Calu3 (cell line): ENCODE measurements at regions of chr14 and their contacts with region 1.

Region 1: DNA sequence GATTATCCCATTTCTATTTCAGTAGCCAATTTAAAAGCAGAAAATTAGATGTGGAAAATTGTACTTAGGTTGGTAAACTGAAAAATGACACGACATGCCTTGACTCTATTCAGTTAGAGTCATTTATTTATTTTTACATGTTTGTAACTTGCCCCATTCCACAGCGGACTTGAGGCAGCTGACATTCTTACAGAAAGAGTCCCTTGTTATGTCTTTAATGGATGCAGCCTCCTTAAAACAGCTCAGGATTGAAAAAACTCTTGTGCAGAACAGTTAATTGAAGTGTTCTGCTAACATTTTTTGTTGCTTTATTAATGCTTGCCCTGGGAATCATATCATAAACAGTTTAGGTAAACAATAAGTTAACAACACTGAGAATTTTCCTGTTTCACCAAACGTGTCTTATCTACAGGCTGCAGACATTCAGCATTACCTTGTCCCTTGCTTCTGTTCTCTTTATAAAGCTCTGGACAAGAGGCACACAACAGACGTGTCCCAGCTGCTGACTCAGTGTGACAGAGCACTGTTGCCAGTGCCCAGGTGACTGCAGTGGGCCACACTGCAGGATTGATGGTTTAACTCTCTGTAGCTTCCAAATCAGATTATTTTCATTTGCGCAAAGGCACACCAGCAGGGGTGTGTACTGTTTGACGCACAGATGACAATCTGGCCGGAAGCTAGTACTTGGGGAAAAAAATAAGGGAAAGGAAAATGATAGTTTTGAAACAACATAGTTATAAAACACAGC is 101.6 kb downstream of the PELI2 start:
- DNase-seq: no peak
- H3K4me3 Mint-ChIP-seq: no peak overlapping the region
- H3K27ac Mint-ChIP-seq: no peak overlapping the region
- H3K4me1 Mint-ChIP-seq: peaks cover 5% of the 10 kb centered on the region
- H3K27me3 Mint-ChIP-seq: no peaks in the 10 kb centered on the region
- CTCF ChIP-seq: no peak

Region 2: GRCh38 chr14:56145965-56146364 is 73.9 kb before region 1 on chr14:
- CTCF ChIA-PET with region 1: no interaction called
- intact Hi-C with region 1: loop called (anchors 10 kb)
- DNase-seq: no peak
- H3K4me3 Mint-ChIP-seq: no peak overlapping the region
- H3K27ac Mint-ChIP-seq: no peak overlapping the region
- H3K4me1 Mint-ChIP-seq: peaks cover 27% of the 10 kb centered on the region
- H3K27me3 Mint-ChIP-seq: no peaks in the 10 kb centered on the region
- CTCF ChIP-seq: no peak

Region 3: DNA sequence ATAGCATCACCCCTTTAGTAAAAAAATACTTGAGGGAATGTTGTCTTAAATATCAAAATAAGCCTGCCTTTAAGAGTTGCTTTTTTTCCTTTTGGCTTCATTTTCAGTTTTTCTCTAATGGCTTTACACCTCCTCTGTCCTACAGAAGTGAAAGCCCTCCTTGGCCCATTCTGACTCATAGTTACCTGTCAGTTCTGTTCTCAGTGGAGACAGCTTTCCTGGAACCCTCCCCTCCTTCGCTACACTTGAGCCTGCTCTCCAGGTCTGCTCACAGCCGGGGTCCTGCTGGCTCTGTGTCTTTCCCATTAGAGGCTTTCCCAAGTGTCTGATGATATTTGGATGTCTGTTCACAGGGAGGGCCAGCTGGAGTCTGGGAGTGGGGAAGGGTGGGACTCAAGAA is 17.6 kb before region 1 on chr14:
- CTCF ChIA-PET with region 1: no interaction called
- intact Hi-C with region 1: no loop called
- DNase-seq: no peak
- H3K4me3 Mint-ChIP-seq: no peak overlapping the region
- H3K27ac Mint-ChIP-seq: no peak overlapping the region
- H3K4me1 Mint-ChIP-seq: no peaks in the 10 kb centered on the region
- H3K27me3 Mint-ChIP-seq: no peaks in the 10 kb centered on the region
- CTCF ChIP-seq: no peak

Region 4: DNA sequence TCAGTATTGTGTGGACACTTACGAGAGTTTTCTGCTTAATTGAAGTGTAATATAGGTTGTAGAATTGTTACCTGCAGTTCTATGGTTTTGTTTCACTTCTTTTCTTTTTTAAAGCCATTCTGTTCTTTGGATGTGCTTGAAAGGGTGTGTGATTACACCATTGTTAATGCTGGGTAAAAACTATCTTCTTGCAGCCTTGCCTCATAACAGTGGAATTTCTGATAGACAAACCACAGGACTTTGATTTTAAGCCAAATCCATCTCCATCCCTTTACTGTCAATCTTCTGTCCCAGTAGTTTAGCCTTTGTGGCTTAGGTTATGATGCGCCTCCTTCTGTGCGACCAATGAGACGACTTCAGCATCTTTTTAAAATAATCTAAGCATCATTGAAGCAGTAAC is 80.7 kb after region 1 on chr14:
- CTCF ChIA-PET with region 1: no interaction called
- intact Hi-C with region 1: no loop called
- DNase-seq: no peak
- H3K4me3 Mint-ChIP-seq: no peak overlapping the region
- H3K27ac Mint-ChIP-seq: no peak overlapping the region
- H3K4me1 Mint-ChIP-seq: no peaks in the 10 kb centered on the region
- H3K27me3 Mint-ChIP-seq: no peaks in the 10 kb centered on the region
- CTCF ChIP-seq: no peak

Region 5: GRCh38 chr14:56351861-56352260 is 132.0 kb after region 1 on chr14:
- CTCF ChIA-PET with region 1: no interaction called
- intact Hi-C with region 1: no loop called
- DNase-seq: no peak
- H3K4me3 Mint-ChIP-seq: no peak overlapping the region
- H3K27ac Mint-ChIP-seq: no peak overlapping the region
- H3K4me1 Mint-ChIP-seq: no peaks in the 10 kb centered on the region
- H3K27me3 Mint-ChIP-seq: no peaks in the 10 kb centered on the region
- CTCF ChIP-seq: no peak